Heart right ventricle (tissue), 16 donors: ENCODE measurements at regions of chr21 and their contacts with region 1.

Region 1: DNA sequence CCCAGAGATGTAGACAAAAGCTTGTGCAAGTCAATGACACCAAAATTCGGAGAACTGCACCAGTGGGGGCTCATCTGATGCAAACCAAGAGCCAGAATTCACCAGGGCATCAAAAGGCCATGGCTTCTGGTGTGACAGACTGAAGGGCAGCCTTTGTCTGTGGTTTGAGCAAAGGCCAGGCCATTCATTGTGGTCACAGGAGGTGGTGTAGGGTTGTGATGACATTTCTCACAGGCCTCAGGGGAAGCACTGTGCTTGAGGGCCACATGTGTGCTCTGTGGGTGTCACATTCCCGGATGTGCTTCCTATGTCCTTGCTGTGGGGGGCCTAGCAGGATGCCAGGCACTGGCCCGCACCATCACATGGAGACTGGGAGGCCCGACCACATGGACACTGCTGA is 22.5 kb upstream of the KCNE1 start:
- DNase-seq: no peak
- ATAC-seq: no peak
- H3K4me3 ChIP-seq: no peak overlapping the region
- H3K27ac ChIP-seq: no peak overlapping the region
- H3K4me1 ChIP-seq: peaks cover 0 to 44% (median 28%) of the 10 kb centered on the region in 9 donors
- H3K27me3 ChIP-seq: no peaks in the 10 kb centered on the region
- CTCF ChIP-seq: no peak

Region 2: GRCh38 chr21:34582506-34583150 is 48.1 kb after region 1 on chr21:
- intact Hi-C with region 1: loop called in 6 of 10 experiments (anchors 5 kb)
- DNase-seq: peak; percentile 34 to 38
- ATAC-seq: peak; percentile 68 to 87 (median 72)
- H3K4me3 ChIP-seq: no peak overlapping the region
- H3K27ac ChIP-seq: peak overlapping the region; percentile 16 to 92 (median 70)
- H3K4me1 ChIP-seq: peaks cover 27 to 66% (median 43%) of the 10 kb centered on the region in 9 donors
- H3K27me3 ChIP-seq: no peaks in the 10 kb centered on the region
- CTCF ChIP-seq: peak in 8 of 9 donors; percentile 18 to 58 (median 44)

Region 3: GRCh38 chr21:34801519-34802132 is 267.1 kb after region 1 on chr21:
- intact Hi-C with region 1: no loop called
- DNase-seq: no peak
- ATAC-seq: no peak
- H3K4me3 ChIP-seq: no peak overlapping the region
- H3K27ac ChIP-seq: no peak overlapping the region
- H3K4me1 ChIP-seq: peaks cover 0 to 47% (median 0%) of the 10 kb centered on the region in 9 donors
- H3K27me3 ChIP-seq: no peaks in the 10 kb centered on the region
- CTCF ChIP-seq: peak in 3 of 9 donors; percentile 22 to 25 (median 24)